Mammary epithelial cell (primary cell): ENCODE measurements at regions of chrX and their contacts with region 1.

Region 1: GRCh38 chrX:110310000-110310790 is 7.7 kb downstream of the AMMECR1 start:
- DNase-seq: no peak
- H3K4me3 ChIP-seq: no peak overlapping the region
- H3K27ac ChIP-seq: no peak overlapping the region
- H3K4me1 ChIP-seq: no peaks in the 10 kb centered on the region
- H3K27me3 ChIP-seq: peaks cover 3% of the 10 kb centered on the region
- CTCF ChIP-seq: no peak

Region 2: DNA sequence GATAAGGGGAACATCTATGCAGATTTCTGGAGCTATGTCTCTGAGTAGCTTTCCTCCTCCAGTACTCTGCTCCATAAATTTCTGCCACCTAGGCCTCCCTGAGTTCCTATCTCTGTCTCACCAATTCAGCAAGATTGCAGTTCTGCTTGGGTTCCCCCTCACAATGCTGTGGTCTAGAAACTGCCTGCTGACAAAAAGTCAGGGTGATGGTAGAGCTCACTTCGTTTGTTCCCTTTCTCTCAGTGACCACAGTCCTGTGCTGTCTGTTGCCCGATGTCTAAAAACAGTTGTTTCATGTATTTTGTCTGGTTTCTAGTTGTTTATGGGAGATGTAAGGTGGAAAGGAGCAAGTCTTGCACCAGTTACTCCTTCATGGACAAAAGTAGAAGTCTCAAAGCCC is 33.4 kb before region 1 on chrX:
- CTCF ChIA-PET with region 1: no interaction called
- dilution Hi-C with region 1: no loop called
- in situ Hi-C with region 1: no loop called
- intact Hi-C with region 1: no loop called
- DNase-seq: no peak
- H3K4me3 ChIP-seq: no peak overlapping the region
- H3K27ac ChIP-seq: no peak overlapping the region
- H3K4me1 ChIP-seq: no peaks in the 10 kb centered on the region
- H3K27me3 ChIP-seq: no peaks in the 10 kb centered on the region
- CTCF ChIP-seq: no peak

Region 3: DNA sequence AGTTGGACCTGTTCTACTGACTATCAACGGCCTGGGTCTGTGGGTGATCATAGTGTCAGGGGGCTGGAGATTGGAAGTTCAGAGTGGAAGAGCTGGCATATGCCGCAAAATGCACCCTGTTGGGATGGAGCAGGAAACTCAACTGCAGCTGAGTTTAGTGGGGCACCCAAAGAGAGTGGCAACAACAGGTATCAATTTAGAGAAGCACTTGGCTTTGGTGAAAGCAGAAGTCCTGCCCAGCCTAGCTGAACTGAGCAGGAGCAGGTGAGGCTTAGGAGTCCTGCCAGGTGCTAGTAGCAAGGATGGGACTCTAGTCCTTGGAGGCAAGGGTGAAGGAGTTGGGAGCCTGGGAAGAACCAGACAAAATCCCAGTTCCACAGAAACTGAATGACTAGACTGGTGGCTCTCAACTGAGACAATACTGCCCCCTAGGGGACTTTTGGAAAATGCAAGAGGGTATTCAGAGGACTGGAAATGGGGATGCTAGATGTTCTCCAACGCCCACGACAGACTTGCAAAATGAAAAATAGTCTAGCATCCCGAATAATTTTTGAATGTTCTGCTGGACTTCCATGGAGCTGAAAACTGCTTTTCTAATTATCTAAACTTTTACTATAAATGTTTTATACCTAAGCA is 97.8 kb after region 1 on chrX:
- CTCF ChIA-PET with region 1: no interaction called
- dilution Hi-C with region 1: loop called (anchors 5 kb)
- in situ Hi-C with region 1: no loop called
- intact Hi-C with region 1: no loop called
- DNase-seq: peak; percentile 63
- H3K4me3 ChIP-seq: no peak overlapping the region
- H3K27ac ChIP-seq: no peak overlapping the region
- H3K4me1 ChIP-seq: peaks cover 20% of the 10 kb centered on the region
- H3K27me3 ChIP-seq: no peaks in the 10 kb centered on the region
- CTCF ChIP-seq: peak; percentile 56 to 78

Region 4: DNA sequence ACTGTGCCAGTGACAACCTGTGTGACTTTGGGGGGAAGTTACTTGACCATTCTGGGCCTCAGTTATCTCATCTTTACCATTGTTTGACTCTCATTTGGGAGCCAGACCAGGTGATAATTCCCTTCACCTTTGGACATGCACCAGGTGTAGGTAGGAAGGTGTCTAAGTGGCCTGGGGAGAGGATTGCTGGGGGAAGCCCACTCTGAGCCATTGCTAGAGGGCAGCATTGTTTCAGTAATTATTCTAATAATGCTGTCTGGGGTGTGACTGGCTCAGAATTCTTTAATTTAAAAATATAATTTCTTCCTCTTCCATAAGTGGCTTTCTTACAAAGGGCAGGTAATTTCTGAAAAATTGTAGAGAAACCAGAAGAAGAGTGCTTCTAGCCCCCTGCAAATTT is 152.8 kb after region 1 on chrX:
- CTCF ChIA-PET with region 1: no interaction called
- dilution Hi-C with region 1: no loop called
- in situ Hi-C with region 1: no loop called
- intact Hi-C with region 1: no loop called
- DNase-seq: no peak
- H3K4me3 ChIP-seq: no peak overlapping the region
- H3K27ac ChIP-seq: no peak overlapping the region
- H3K4me1 ChIP-seq: no peaks in the 10 kb centered on the region
- H3K27me3 ChIP-seq: no peaks in the 10 kb centered on the region
- CTCF ChIP-seq: peak in 1 of 2 donors; percentile 28

Region 5: GRCh38 chrX:110531873-110532580 is 221.8 kb after region 1 on chrX:
- CTCF ChIA-PET with region 1: no interaction called
- dilution Hi-C with region 1: no loop called
- in situ Hi-C with region 1: no loop called
- intact Hi-C with region 1: no loop called
- DNase-seq: no peak
- H3K4me3 ChIP-seq: no peak overlapping the region
- H3K27ac ChIP-seq: no peak overlapping the region
- H3K4me1 ChIP-seq: no peaks in the 10 kb centered on the region
- H3K27me3 ChIP-seq: peaks cover 2% of the 10 kb centered on the region
- CTCF ChIP-seq: no peak